ENCODE measurements at regions of chr15 and their contacts with region 1.

Region 1: DNA sequence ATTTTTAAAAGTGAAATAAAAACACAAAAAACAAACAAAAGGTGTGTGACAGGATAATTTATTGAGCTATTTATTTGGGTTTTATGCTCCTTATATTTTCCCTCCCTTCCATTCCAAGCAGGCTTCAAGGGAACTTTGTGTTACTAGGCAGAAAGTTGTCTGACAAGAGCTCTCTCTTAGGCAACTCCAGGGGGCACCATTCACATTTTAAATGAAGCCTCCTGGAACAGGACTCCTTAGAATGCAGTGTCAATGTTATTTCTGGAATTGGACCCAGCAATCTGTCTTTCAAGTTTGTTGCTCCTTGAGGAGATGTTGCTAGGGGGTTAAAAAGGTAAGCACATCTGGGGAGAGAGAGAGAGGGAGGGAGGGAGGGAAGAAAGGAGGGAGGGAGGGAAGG is 5.4 kb upstream of the RFX7 start:
- DNase-seq: no peak
- H3K4me3 ChIP-seq: no peak overlapping the region
- H3K27ac ChIP-seq: no peak overlapping the region
- H3K4me1 ChIP-seq: peaks cover 7 to 15% (median 11%) of the 10 kb centered on the region in 4 experiments; a peak in 6 of 7 replicates
- H3K27me3 ChIP-seq: no peaks in the 10 kb centered on the region
- CTCF ChIP-seq: peak in 2 of 3 experiments; percentile 67 to 68; a peak in 3 of 4 replicates
- EP300 ChIP-seq: no peak
- POLR2A ChIP-seq: no peak
- RAD21 ChIP-seq: peak; percentile 79 to 86

Region 2: DNA sequence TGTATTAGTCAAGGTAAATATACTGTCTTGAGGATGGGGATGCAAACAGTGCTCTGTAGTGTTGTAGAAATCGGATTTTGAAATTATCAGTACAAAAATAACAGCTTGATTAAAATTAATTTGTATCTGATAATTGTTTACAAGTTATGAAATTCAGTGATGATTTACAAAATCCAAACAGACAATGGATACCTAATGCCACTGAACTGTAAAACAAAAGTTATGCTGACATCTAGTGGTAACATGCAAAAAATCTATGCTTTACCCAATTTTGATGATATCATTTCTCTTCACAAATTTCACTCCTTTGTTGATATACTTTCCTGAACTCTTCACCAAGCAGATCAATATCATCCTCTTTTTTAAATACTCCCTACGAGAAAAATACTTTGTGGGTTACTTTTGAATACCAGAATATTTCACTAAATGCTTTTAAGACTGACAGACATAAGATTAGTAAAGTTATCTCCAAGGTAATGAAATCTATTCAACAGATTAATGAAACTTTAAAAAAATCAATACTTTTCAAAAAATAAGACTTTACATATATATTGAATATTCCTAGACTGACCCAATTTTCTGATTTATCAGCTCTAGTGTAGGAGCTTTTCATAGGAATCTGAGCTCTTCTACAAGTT is 179.8 kb after region 1 on chr15:
- CTCF ChIA-PET with region 1: interaction called, 119 read pairs
- POLR2A ChIA-PET with region 1: interaction called, 4 read pairs
- DNase-seq: no peak
- H3K4me3 ChIP-seq: no peak overlapping the region
- H3K27ac ChIP-seq: no peak overlapping the region
- H3K4me1 ChIP-seq: no peaks in the 10 kb centered on the region
- H3K27me3 ChIP-seq: no peaks in the 10 kb centered on the region
- CTCF ChIP-seq: peak in 2 of 3 experiments; percentile 43 to 46; a peak in 2 of 4 replicates
- EP300 ChIP-seq: no peak
- POLR2A ChIP-seq: no peak
- RAD21 ChIP-seq: peak; percentile 65 to 74

Measured in H1 (cell line).